CD8-positive, alpha-beta memory T cell (primary cell): ENCODE measurements at regions of chr4 and their contacts with region 1.

Region 1: GRCh38 chr4:98467627-98468072 is 190.8 kb downstream of the TSPAN5 start:
- DNase-seq: peak; percentile 42 to 77 (median 50)
- H3K4me3 ChIP-seq: peak overlapping the region; percentile 48
- H3K4me3 Mint-ChIP-seq: peak overlapping the region; percentile 21 to 85 (median 75)
- H3K27ac ChIP-seq: no peak overlapping the region
- H3K27ac Mint-ChIP-seq: peak overlapping the region in 4 of 8 donors; percentile 11 to 53 (median 33)
- H3K4me1 ChIP-seq: peaks cover 14% of the 10 kb centered on the region
- H3K4me1 Mint-ChIP-seq: peaks cover 33 to 38% (median 36%) of the 10 kb centered on the region in 3 donors
- H3K27me3 ChIP-seq: no peaks in the 10 kb centered on the region
- H3K27me3 Mint-ChIP-seq: no peaks in the 10 kb centered on the region

Region 2: DNA sequence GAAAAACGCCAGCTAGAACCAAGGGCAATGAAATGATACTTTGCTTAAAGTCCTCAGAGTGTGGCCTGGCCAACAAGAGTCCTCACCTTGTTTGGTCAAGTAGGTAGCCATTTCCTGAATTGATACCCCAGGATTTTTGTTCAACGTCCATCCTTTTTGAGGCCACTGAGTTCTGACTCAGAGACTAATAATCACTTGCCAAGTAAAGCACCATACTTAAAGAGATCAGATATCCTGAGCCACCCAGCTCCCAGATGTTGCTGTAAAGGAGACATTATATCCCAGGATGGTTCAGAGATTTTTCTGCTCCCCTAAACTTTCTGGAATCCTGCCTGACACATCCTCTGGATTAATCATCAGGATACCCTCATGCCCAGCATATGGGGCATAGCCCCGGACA is 15.6 kb before region 1 on chr4:
- CTCF ChIA-PET with region 1: interaction called, 11 read pairs
- POLR2A ChIA-PET with region 1: no interaction called
- DNase-seq: no peak
- H3K4me3 ChIP-seq: no peak overlapping the region
- H3K4me3 Mint-ChIP-seq: no peak overlapping the region
- H3K27ac ChIP-seq: no peak overlapping the region
- H3K27ac Mint-ChIP-seq: no peak overlapping the region
- H3K4me1 ChIP-seq: peaks cover 25% of the 10 kb centered on the region
- H3K4me1 Mint-ChIP-seq: peaks cover 32 to 40% (median 39%) of the 10 kb centered on the region in 3 donors
- H3K27me3 ChIP-seq: no peaks in the 10 kb centered on the region
- H3K27me3 Mint-ChIP-seq: no peaks in the 10 kb centered on the region

Region 3: GRCh38 chr4:98482847-98483806 is 15.5 kb after region 1 on chr4:
- CTCF ChIA-PET with region 1: interaction called, 25 read pairs
- POLR2A ChIA-PET with region 1: no interaction called
- DNase-seq: no peak
- H3K4me3 ChIP-seq: no peak overlapping the region
- H3K4me3 Mint-ChIP-seq: peak overlapping the region in 2 of 7 donors; percentile 40 to 78
- H3K27ac ChIP-seq: no peak overlapping the region
- H3K27ac Mint-ChIP-seq: peak overlapping the region in 6 of 8 donors; percentile 25 to 57 (median 38)
- H3K4me1 ChIP-seq: no peaks in the 10 kb centered on the region
- H3K4me1 Mint-ChIP-seq: peaks cover 34 to 59% (median 57%) of the 10 kb centered on the region in 3 donors
- H3K27me3 ChIP-seq: no peaks in the 10 kb centered on the region
- H3K27me3 Mint-ChIP-seq: no peaks in the 10 kb centered on the region

Region 4: DNA sequence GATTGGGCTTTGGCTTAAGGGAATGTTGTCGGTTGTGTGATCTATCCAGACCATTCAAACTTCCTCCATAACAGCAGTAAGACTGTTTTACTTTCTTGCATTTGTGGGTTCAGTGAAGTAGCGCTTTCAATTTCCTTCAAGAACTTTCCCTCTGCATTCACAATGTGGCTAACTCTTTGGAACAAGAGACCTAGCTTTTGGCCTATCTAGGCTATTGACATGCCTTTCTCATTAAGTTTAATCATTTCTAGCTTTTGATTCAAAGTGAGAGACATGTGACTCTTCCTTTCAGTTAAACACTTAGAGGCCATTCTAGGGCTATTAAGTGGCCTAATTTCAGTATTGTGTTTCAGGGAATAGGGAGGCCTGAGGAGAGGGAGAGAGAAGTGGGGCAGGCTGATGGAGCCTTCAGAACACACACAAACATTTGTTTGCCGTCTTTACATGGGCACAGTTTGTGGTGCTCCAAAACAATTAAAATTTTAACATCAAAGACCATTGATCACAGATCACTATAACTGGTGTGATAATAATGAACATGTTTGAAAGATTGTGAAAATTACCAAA is 586.9 kb after region 1 on chr4:
- CTCF ChIA-PET with region 1: interaction called, 13 read pairs
- POLR2A ChIA-PET with region 1: no interaction called
- DNase-seq: no peak
- H3K4me3 ChIP-seq: no peak overlapping the region
- H3K4me3 Mint-ChIP-seq: no peak overlapping the region
- H3K27ac ChIP-seq: no peak overlapping the region
- H3K27ac Mint-ChIP-seq: peak overlapping the region; percentile 9 to 59 (median 20)
- H3K4me1 ChIP-seq: peaks cover 6% of the 10 kb centered on the region
- H3K4me1 Mint-ChIP-seq: peaks cover 15 to 32% (median 29%) of the 10 kb centered on the region in 3 donors
- H3K27me3 ChIP-seq: no peaks in the 10 kb centered on the region
- H3K27me3 Mint-ChIP-seq: no peaks in the 10 kb centered on the region